ENCODE measurements at regions of chr1 and their contacts with region 1.

Region 1: GRCh38 chr1:156728597-156729462 is at the start of gene ISG20L2:
- DNase-seq: peak; percentile 99
- H3K4me3 Mint-ChIP-seq: no peak within 1 kb of the TSS
- H3K27ac Mint-ChIP-seq: peak within 1 kb of the TSS; percentile 98
- H3K4me1 Mint-ChIP-seq: peaks cover 27% of the 10 kb centered on the region
- H3K27me3 Mint-ChIP-seq: no peaks in the 10 kb centered on the region
- total RNA-seq, gene ISG20L2: 24.8 to 28.7 TPM

Region 2: DNA sequence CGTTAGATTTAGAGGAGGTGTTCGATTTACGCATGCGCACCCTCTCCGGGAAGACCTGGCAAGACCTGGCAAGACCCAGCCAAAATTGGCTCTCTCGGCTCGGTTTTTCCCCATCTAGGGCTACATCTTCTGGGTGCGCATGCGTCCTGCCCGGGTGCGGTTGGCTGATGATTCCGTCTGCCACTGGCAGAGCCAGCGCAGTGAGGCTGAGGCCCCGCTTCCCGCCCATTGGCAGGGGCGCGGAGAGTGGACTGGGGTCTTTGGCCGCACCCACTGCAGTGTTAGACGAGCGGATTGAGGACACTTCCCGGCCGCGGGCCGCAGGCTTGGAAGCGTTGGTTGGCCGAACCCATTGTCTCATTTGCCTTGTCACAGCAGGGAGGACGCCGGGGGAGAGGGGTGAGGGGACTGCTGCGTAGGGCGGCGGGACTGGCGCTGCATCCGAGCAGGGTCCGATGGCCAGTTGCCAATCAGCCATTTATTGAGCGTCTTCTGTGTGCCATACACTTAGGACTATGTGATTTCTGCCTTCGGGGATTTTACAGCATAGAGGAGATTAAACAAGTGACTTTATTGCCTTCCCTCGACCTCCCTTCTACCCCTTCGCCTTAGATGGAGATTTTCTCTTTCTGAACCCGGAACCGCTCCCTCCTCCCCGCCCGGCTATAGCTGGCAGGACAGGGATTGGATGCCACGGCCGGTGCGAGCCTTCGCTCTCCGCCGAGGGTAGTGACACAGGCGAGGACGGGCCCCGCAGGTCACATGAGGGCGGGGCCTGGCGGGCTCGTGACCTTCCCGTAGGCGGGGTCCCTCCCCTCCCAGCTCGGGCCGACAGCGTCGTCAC is 272.0 kb before region 1 on chr1:
- CTCF ChIA-PET with region 1: no interaction called
- intact Hi-C with region 1: loop called (anchors 1 kb)
- DNase-seq: peak; percentile 100
- H3K4me3 Mint-ChIP-seq: peak overlapping the region; percentile 86
- H3K27ac Mint-ChIP-seq: peak overlapping the region; percentile 97
- H3K4me1 Mint-ChIP-seq: peaks cover 10% of the 10 kb centered on the region
- H3K27me3 Mint-ChIP-seq: no peaks in the 10 kb centered on the region

Region 3: DNA sequence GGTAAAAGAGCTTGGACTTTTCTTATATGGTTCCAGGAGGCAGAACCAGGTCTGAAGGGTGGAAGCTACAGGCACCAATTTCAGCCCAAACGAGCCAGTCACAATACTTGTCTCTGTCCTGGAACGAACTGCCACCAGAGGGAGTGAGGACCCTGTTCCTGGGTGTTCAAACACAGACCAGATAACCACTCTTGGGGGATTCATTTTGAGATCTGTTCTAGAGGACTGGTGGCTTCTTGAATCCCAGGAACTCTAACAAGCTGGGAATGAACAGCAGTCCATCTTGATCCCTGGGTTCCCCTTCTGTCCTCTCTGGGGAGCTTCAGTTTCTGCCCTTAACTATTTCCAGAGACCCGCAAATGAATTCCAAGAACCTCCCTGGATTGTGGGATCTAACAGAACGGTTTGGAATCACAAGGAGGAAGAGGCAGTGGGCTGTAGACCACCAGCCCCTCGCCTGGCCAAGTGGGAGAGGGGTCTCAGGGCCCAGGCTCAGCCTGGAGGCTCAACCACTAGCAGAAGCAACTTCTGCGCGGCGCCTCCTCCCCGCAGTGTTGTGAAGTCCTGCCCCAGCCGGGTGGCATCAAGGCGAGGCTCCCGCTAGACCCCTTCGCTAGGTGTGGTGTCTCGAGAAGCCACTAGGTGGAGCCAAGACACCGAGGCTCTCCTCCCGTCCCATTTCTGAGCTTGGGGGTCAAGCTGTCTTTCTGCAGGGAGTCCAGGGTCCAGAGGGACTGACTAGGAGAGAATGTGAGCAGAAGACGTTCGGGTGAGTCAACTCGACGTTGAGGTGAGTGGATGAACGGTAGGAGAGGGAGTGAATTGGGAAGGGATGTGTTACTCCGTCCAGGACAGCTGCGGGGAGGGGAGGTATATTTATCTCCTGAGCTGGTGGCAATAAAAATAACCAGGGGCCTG is 39.5 kb before region 1 on chr1:
- CTCF ChIA-PET with region 1: interaction called, 166 read pairs
- intact Hi-C with region 1: loop called (anchors 1 kb)
- DNase-seq: peak; percentile 80
- H3K4me3 Mint-ChIP-seq: no peak overlapping the region
- H3K27ac Mint-ChIP-seq: no peak overlapping the region
- H3K4me1 Mint-ChIP-seq: peaks cover 28% of the 10 kb centered on the region
- H3K27me3 Mint-ChIP-seq: peaks cover 46% of the 10 kb centered on the region

Region 4: DNA sequence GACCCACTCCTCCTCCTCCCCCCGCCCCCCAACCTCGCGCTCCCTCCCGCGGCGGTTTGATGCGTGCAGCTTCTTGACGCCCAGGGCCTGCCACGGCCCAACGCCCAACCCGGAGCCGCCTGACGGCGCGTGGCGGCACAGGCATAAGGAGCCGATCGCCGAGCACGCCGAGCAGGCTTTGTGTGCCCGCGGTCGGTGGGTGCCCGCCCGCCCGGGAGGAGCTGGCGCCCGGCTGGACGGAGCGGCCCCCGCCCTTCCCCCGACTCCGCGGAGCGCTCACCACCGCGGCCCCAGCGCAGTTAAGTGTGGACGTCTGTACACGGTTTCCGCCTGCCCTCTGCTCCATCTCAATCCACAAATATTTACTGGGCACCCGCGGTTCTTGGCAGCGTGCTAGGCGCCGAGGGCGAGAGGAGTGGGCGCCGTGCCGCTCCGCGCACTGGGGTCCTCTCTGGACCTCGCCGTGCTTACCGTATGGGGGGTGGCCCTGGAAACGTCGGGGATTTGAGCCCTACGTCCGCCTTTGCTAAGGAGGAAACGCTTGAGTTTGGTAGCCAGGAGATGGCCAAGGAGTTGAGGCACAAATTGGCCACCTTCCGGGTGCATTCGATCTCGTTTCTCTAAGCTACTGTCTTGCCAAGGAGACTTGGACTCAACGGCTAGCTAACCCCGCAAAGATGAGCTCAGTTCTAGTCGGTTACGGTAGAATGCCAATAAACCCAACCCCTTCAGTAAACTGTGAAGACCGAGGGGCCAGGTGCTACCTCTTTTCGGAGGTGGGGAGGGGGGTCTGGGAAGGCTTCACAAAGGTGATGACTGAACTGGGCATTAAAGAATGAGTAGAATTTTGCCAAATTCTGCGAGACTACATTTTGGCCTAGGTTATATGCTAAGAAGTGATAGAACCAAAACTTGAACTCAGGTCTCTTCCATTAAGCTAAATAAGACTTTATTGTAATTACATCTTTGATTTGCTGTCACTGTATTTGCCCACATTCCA is 23.2 kb after region 1 on chr1:
- CTCF ChIA-PET with region 1: interaction called, 48 read pairs
- intact Hi-C with region 1: loop called (anchors 1 kb)
- DNase-seq: peak; percentile 98
- H3K4me3 Mint-ChIP-seq: peak overlapping the region; percentile 86
- H3K27ac Mint-ChIP-seq: peak overlapping the region; percentile 88
- H3K4me1 Mint-ChIP-seq: peaks cover 28% of the 10 kb centered on the region
- H3K27me3 Mint-ChIP-seq: no peaks in the 10 kb centered on the region

Region 5: GRCh38 chr1:156789621-156790318 is 60.9 kb after region 1 on chr1:
- CTCF ChIA-PET with region 1: interaction called, 30 read pairs
- intact Hi-C with region 1: no loop called
- DNase-seq: no peak
- H3K4me3 Mint-ChIP-seq: no peak overlapping the region
- H3K27ac Mint-ChIP-seq: no peak overlapping the region
- H3K4me1 Mint-ChIP-seq: no peaks in the 10 kb centered on the region
- H3K27me3 Mint-ChIP-seq: no peaks in the 10 kb centered on the region

Region 6: GRCh38 chr1:156860113-156860627 is 131.3 kb after region 1 on chr1:
- CTCF ChIA-PET with region 1: interaction called, 59 read pairs
- intact Hi-C with region 1: loop called (anchors 1 kb)
- DNase-seq: peak; percentile 56
- H3K4me3 Mint-ChIP-seq: peak overlapping the region; percentile 64
- H3K27ac Mint-ChIP-seq: no peak overlapping the region
- H3K4me1 Mint-ChIP-seq: peaks cover 20% of the 10 kb centered on the region
- H3K27me3 Mint-ChIP-seq: peaks cover 56% of the 10 kb centered on the region